HepG2 (cell line): ENCODE measurements at regions of chrX and their contacts with region 1.

Region 1: DNA sequence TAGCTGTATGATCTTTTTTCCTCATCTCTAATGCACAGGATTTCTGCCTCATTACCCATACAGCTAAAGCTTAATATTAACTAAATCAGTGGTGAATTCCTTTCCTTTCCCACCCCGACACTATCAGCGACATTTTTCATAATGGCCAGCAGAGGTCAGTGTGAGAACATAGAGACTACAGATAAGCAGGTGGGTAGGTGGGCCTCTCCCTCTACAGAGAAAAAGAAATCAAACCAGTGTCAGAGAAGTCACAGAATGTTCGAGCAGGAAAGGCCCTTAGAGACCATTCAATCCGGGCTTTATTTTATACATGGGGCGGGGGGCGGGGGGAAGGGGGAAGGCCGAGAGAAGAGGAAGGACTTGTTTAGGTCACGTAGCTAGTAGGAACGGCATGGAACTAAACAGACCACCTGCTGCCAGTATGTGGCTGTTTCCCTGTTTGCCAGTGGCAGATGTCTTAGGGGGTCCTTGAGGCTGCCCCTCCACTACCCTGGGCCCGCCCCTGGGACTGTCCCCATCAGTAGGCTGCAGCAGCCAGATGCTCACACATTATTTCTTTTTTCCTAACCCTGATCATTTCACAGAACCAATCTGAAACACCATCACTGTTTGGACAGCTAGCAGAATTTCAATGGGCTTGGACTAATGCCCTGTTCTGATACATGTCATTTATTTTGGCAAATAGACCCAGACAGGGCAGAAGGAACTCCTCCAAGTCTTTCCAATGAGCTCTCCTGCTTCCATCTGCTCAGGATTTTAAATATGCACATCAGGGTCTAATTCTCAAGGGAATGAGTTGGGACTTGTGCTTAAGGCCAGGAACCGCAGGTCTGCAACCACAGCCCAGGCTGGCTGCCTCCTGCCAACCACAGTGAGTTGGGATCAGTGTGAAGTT is 133.4 kb downstream of the ATG4A start:
- DNase-seq: peak; percentile 37
- ATAC-seq: peak; percentile 64
- H3K4me3 ChIP-seq: no peak overlapping the region
- H3K27ac ChIP-seq: no peak overlapping the region
- H3K4me1 ChIP-seq: no peaks in the 10 kb centered on the region
- H3K27me3 ChIP-seq: no peaks in the 10 kb centered on the region
- CTCF ChIP-seq: peak; percentile 75
- EP300 ChIP-seq: no peak
- POLR2A ChIP-seq: no peak
- RAD21 ChIP-seq: 0 out of 2 replicates have a peak, but pooled peaks have one; percentile 36

Region 2: DNA sequence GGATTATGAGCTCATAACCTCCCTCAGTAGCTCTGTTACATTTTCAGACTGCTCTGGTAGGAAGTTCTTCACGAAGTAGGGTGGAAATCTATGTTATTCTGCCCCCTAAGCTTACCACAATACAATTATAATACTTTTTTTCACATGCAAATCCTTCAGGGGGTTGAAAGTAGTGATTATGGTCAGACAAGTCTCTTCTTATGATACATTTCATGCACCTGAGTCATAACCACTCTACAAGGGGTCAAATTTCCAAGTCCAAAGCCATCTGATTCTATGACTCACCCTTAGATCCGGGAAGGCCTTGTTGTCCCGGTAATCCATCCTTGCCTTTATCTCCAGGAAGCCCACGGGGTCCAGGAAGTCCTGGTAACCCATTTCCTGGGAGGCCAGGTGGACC is 38.2 kb before region 1 on chrX:
- CTCF ChIA-PET with region 1: no interaction called
- POLR2A ChIA-PET with region 1: no interaction called
- in situ Hi-C with region 1: no loop called
- intact Hi-C with region 1: no loop called
- DNase-seq: peak; percentile 36
- ATAC-seq: peak; percentile 57; the same call in 2 of the 3 replicates
- H3K4me3 ChIP-seq: no peak overlapping the region
- H3K27ac ChIP-seq: no peak overlapping the region
- H3K4me1 ChIP-seq: peaks cover 9% of the 10 kb centered on the region
- H3K27me3 ChIP-seq: no peaks in the 10 kb centered on the region
- CTCF ChIP-seq: no peak
- EP300 ChIP-seq: peak in 1 of 2 experiments; percentile 31; a peak in 1 of 4 replicates
- POLR2A ChIP-seq: no peak
- RAD21 ChIP-seq: no peak

Region 3: GRCh38 chrX:108261549-108262203 is 36.7 kb after region 1 on chrX:
- CTCF ChIA-PET with region 1: no interaction called
- POLR2A ChIA-PET with region 1: no interaction called
- in situ Hi-C with region 1: no loop called
- intact Hi-C with region 1: no loop called
- DNase-seq: peak; percentile 65
- ATAC-seq: peak; percentile 70
- H3K4me3 ChIP-seq: no peak overlapping the region; a peak in 1 of 6 replicates
- H3K27ac ChIP-seq: peak overlapping the region; percentile 60
- H3K4me1 ChIP-seq: peaks cover 56% of the 10 kb centered on the region
- H3K27me3 ChIP-seq: no peaks in the 10 kb centered on the region
- CTCF ChIP-seq: no peak
- EP300 ChIP-seq: peak in 1 of 2 experiments; percentile 67; a peak in 2 of 4 replicates
- POLR2A ChIP-seq: no peak
- RAD21 ChIP-seq: no peak

Region 4: GRCh38 chrX:108304210-108304609 is 79.2 kb after region 1 on chrX:
- CTCF ChIA-PET with region 1: interaction called, 14 read pairs
- POLR2A ChIA-PET with region 1: no interaction called
- in situ Hi-C with region 1: loop called (anchors 5 kb)
- intact Hi-C with region 1: loop called (anchors 1 kb)
- DNase-seq: no peak
- ATAC-seq: no peak
- H3K4me3 ChIP-seq: no peak overlapping the region
- H3K27ac ChIP-seq: no peak overlapping the region
- H3K4me1 ChIP-seq: peaks cover 46% of the 10 kb centered on the region
- H3K27me3 ChIP-seq: no peaks in the 10 kb centered on the region
- CTCF ChIP-seq: peak; percentile 62
- EP300 ChIP-seq: no peak
- POLR2A ChIP-seq: no peak
- RAD21 ChIP-seq: no peak